HepG2 (cell line): ENCODE measurements at regions of chr3 and their contacts with region 1.

Region 1: GRCh38 chr3:89405176-89405575 is 297.8 kb downstream of the EPHA3 start:
- DNase-seq: no peak
- ATAC-seq: no peak
- H3K4me3 ChIP-seq: no peak overlapping the region
- H3K27ac ChIP-seq: no peak overlapping the region
- H3K4me1 ChIP-seq: no peaks in the 10 kb centered on the region
- H3K27me3 ChIP-seq: no peaks in the 10 kb centered on the region
- CTCF ChIP-seq: no peak
- EP300 ChIP-seq: no peak
- POLR2A ChIP-seq: no peak
- RAD21 ChIP-seq: no peak

Region 2: GRCh38 chr3:89353465-89353864 is 51.7 kb before region 1 on chr3:
- CTCF ChIA-PET with region 1: no interaction called
- POLR2A ChIA-PET with region 1: no interaction called
- in situ Hi-C with region 1: no loop called
- intact Hi-C with region 1: loop called (anchors 10 kb)
- DNase-seq: no peak
- ATAC-seq: no peak
- H3K4me3 ChIP-seq: no peak overlapping the region
- H3K27ac ChIP-seq: no peak overlapping the region
- H3K4me1 ChIP-seq: no peaks in the 10 kb centered on the region
- H3K27me3 ChIP-seq: no peaks in the 10 kb centered on the region
- CTCF ChIP-seq: no peak
- EP300 ChIP-seq: no peak
- POLR2A ChIP-seq: no peak
- RAD21 ChIP-seq: no peak